A673 (cell line): ENCODE measurements at regions of chr20 and their contacts with region 1.

Region 1: GRCh38 chr20:39829256-39829655 is 859.8 kb downstream of the MAFB start:
- DNase-seq: peak; percentile 62
- H3K4me3 ChIP-seq: no peak overlapping the region
- H3K27ac ChIP-seq: no peak overlapping the region
- H3K4me1 ChIP-seq: peaks cover 16% of the 10 kb centered on the region
- H3K27me3 ChIP-seq: no peaks in the 10 kb centered on the region
- CTCF ChIP-seq: peak; percentile 74

Region 2: GRCh38 chr20:39853636-39854035 is 24.4 kb after region 1 on chr20:
- CTCF ChIA-PET with region 1: no interaction called
- POLR2A ChIA-PET with region 1: no interaction called
- intact Hi-C with region 1: no loop called
- DNase-seq: no peak
- H3K4me3 ChIP-seq: no peak overlapping the region
- H3K27ac ChIP-seq: no peak overlapping the region
- H3K4me1 ChIP-seq: peaks cover 25% of the 10 kb centered on the region
- H3K27me3 ChIP-seq: no peaks in the 10 kb centered on the region
- CTCF ChIP-seq: no peak

Region 3: DNA sequence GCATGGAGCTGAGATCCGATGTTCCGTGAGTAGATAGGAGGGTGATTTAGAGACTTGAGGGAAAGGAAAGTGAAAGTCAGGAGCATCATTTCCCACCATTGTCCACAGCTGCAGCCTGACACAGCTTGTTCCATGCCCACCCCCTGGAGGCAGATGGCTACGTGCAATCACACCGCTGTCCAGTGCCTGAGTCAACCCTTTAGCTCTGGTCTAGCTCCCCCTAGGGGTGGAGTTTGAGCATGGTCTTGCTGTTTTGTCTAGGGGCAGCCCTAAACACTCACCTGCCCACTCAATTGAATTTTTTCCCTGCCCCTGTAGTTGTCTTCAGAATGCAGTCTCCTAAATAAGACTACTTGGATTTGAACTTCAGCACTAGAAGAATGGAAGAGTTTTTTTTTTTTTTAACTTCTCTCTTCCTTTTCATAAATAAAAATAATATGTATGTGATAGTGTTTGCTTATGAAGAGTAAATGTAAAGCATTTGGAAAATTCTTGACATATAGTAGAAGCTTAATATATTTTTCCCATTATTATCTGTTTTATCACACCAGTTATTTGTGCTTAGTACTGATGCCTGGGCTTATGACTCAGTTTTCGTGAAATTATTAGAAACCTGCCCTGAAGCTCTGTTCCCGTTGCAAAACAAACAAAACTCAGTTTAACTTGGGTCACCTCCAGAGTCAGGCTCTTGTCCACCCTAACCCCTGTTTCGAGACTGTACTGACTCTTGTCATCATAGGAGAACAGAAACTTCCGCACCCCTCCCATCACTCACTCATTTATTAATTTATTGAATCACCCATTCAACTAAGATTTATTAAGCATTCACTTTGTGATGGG is 45.0 kb after region 1 on chr20:
- CTCF ChIA-PET with region 1: interaction called, 11 read pairs
- POLR2A ChIA-PET with region 1: no interaction called
- intact Hi-C with region 1: loop called (anchors 5 kb)
- DNase-seq: peak; percentile 85
- H3K4me3 ChIP-seq: no peak overlapping the region
- H3K27ac ChIP-seq: no peak overlapping the region
- H3K4me1 ChIP-seq: no peaks in the 10 kb centered on the region
- H3K27me3 ChIP-seq: no peaks in the 10 kb centered on the region
- CTCF ChIP-seq: peak; percentile 86